GM13977 (cell line): ENCODE measurements at regions of chr4 and their contacts with region 1.

Region 1: GRCh38 chr4:48578132-48578968 is 88.3 kb downstream of the ZAR1 start:
- DNase-seq: peak; percentile 25
- CTCF ChIP-seq: peak; percentile 84

Region 2: DNA sequence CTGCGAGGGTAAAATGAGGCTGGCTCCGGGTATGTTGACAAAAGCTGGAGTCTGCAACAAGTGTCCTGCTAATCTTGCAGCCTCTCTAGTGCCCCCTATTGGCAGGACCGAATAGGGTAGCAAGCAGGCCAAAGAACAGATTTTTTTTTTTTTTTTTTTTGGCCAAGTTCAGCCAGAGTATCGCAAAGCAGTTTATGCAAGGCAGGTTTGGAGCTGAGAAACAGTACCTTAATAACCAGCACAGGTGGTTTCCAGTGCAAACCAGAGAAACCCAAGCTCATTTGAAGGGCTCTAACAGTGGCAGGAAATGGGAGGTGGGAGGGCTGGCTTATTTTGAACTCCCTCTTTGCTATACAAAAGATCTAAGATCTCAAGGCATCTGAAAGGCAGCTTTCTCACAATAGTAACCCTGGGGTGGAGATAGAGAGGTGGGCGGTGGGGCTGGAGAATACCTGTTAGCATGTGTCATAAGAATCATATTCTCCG is 366.4 kb after region 1 on chr4:
- in situ Hi-C with region 1: loop called (anchors 10 kb)
- DNase-seq: peak; percentile 28
- CTCF ChIP-seq: peak; percentile 61